ENCODE measurements at regions of chr2 and their contacts with region 1.

Region 1: GRCh38 chr2:216687646-216688045 is 7.7 kb downstream of the IGFBP5 start:
- DNase-seq: no peak
- ATAC-seq: no peak

Region 2: DNA sequence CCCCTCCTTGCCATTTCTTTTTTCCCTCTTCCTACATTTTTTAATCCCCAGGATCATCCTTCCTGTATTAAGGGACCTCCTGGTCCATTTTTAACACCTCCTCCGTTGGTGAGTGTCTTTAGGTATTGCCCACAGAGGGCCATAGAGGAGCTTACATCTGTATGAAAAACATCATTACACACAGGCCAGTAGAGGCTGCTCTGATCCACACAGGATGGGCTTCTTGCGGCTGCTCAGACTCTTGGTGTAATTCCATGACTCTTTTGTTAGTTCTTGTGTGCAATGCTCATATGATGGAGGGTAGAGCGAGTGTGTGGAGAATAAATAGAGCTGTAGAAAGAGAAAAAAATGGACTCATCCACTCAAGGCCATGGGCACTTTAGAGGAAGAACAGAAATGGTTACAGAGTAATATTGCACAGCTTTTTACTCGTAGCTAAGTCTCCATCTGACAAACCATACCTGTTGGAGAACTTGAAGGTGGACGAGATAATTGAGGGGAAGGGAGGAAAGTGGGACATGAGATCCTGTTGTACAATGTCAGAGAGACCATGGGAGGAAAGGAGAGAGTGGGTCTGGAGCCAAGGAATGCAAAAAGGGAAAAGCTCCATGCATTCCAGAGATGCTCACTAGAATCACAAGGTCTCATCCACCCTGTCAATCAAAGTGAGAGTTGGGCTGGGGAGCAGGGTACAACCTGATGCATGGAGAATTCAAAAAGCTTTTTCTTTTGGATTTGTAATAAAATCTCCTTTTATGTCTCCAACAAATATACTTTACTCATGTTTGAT is 301.9 kb after region 1 on chr2:
- intact Hi-C with region 1: no loop called
- DNase-seq: no peak
- ATAC-seq: no peak

Region 3: DNA sequence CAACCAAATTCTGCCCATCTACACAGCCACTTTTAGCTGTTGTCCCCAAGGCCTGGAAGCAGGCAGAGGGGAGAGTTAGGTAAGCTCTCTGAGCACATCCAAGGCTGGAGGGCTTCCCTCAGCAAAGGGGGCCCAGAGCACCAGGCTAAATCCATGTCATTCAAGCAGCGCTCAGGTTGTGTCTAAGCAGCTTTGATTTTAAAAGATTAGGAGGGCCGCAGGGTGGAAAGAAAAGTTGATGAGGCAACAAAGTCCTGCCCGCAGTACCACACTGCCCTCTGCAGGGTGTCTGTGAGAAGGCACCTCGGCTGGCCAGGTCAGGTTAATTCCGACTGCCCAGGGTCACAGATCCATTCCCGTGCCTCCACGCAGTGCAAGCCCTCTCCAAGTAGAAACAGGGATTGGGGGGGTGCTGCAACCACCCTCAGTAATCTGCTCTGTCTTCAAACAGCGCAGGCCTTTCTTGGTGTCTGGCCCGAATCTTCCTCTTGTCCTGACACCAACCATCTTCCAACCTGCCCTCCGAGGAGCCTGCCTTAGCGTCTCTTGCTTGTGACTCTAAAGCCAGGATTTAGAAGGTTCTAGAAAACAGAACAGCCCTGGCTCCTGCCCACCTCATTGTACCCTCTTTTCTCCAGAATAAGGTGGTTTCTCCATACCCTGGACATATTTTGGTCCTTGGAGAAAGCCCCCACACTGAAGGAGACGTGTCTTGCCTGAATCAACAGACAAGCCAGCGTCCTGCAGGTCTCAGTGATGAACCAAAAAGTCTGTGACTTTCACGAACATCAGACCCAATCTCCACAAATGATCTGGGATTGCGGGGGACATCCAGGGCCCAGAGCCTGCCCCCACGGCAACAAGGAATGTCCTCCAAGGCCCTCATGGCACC is 1026.0 kb after region 1 on chr2:
- intact Hi-C with region 1: loop called (anchors 5 kb)
- DNase-seq: peak; percentile 92
- ATAC-seq: peak; percentile 90

Region 4: GRCh38 chr2:217756375-217757107 is 1068.9 kb after region 1 on chr2:
- intact Hi-C with region 1: loop called (anchors 10 kb)
- DNase-seq: peak; percentile 93
- ATAC-seq: peak; percentile 92